Activated CD8-positive, alpha-beta T cell treated with anti-CD3 and anti-CD28 coated beads for 36 hours (primary cell): ENCODE measurements at regions of chr16 and their contacts with region 1.

Region 1: GRCh38 chr16:72832621-72833248 is 215.2 kb downstream of the ZFHX3 start:
- DNase-seq: peak; percentile 77
- ATAC-seq: peak; percentile 88
- H3K4me3 Mint-ChIP-seq: no peak overlapping the region
- H3K27ac Mint-ChIP-seq: no peak overlapping the region
- H3K4me1 Mint-ChIP-seq: peaks cover 4% of the 10 kb centered on the region
- H3K27me3 Mint-ChIP-seq: no peaks in the 10 kb centered on the region
- CTCF ChIP-seq: peak; percentile 95

Region 2: GRCh38 chr16:72362973-72363372 is 469.8 kb before region 1 on chr16:
- CTCF ChIA-PET with region 1: no interaction called
- POLR2A ChIA-PET with region 1: no interaction called
- intact Hi-C with region 1: no loop called
- DNase-seq: no peak
- ATAC-seq: no peak
- H3K4me3 Mint-ChIP-seq: no peak overlapping the region
- H3K27ac Mint-ChIP-seq: no peak overlapping the region
- H3K4me1 Mint-ChIP-seq: no peaks in the 10 kb centered on the region
- H3K27me3 Mint-ChIP-seq: no peaks in the 10 kb centered on the region
- CTCF ChIP-seq: no peak

Region 3: DNA sequence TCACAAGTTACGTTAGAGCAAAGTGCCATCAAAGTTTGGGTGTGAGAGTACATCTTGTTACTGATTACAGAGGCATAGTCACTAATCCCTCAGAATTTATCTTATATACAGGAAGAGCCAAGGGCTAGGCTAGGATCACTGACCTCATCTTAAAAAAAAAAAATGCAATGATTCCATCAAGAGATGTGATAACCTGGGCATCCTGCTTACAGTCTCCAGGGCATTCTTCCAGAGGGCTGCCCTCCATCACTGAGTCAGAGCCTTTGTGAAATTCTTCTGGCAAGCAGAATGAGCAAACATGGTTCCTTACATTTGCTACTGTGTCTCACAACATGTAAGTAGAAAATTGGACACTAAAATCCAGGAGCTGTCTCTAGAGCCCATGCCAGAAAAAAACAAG is 195.4 kb before region 1 on chr16:
- CTCF ChIA-PET with region 1: no interaction called
- POLR2A ChIA-PET with region 1: no interaction called
- intact Hi-C with region 1: no loop called
- DNase-seq: no peak
- ATAC-seq: no peak
- H3K4me3 Mint-ChIP-seq: no peak overlapping the region
- H3K27ac Mint-ChIP-seq: no peak overlapping the region
- H3K4me1 Mint-ChIP-seq: peaks cover 3% of the 10 kb centered on the region
- H3K27me3 Mint-ChIP-seq: no peaks in the 10 kb centered on the region
- CTCF ChIP-seq: no peak

Region 4: DNA sequence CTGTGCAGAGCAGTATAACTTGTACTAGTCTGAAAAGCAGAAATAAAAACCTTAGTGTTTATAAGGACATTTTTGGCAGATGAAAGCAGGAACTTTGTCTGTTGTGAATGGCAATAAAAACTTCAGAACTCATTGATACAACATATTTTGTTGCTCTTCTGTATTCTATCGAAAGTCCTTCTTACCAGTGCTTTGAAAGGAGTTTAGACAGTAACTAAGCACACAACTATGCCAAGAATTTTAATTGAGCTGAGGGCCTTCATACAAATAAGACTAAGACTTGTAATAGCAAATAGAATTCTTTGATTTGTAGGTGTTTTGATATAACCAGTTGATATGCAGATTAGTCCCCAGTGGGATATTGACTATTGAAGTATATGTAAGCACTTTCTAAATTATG is 93.2 kb before region 1 on chr16:
- CTCF ChIA-PET with region 1: no interaction called
- POLR2A ChIA-PET with region 1: no interaction called
- intact Hi-C with region 1: no loop called
- DNase-seq: no peak
- ATAC-seq: no peak
- H3K4me3 Mint-ChIP-seq: no peak overlapping the region
- H3K27ac Mint-ChIP-seq: no peak overlapping the region
- H3K4me1 Mint-ChIP-seq: no peaks in the 10 kb centered on the region
- H3K27me3 Mint-ChIP-seq: peaks cover 1% of the 10 kb centered on the region
- CTCF ChIP-seq: no peak

Region 5: DNA sequence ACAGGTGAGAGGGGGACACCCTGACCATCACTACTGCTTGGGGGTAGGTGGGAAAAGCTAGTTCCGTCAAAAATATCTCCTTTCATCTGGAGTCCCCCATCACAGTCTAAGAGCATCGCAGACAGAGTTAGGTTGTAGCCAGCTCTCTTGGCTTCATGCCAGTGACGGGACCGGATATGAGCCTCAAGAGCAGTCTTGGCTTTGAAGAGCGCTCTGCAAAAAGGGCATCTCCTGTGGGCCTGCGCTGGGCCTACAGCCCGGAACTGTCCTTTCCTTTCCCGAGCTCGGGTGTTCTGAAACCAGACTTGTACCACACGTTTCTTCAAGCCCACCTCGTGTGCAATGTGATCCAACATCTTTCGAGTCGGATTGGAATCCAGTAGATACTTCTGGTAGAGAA is 38.4 kb before region 1 on chr16:
- CTCF ChIA-PET with region 1: interaction called, 11 read pairs
- POLR2A ChIA-PET with region 1: no interaction called
- intact Hi-C with region 1: no loop called
- DNase-seq: no peak
- ATAC-seq: no peak
- H3K4me3 Mint-ChIP-seq: no peak overlapping the region
- H3K27ac Mint-ChIP-seq: no peak overlapping the region
- H3K4me1 Mint-ChIP-seq: no peaks in the 10 kb centered on the region
- H3K27me3 Mint-ChIP-seq: peaks cover 1% of the 10 kb centered on the region
- CTCF ChIP-seq: no peak

Region 6: GRCh38 chr16:72818236-72818845 is 14.4 kb before region 1 on chr16:
- CTCF ChIA-PET with region 1: interaction called, 21 read pairs
- POLR2A ChIA-PET with region 1: no interaction called
- intact Hi-C with region 1: no loop called
- DNase-seq: no peak
- ATAC-seq: no peak
- H3K4me3 Mint-ChIP-seq: no peak overlapping the region
- H3K27ac Mint-ChIP-seq: no peak overlapping the region
- H3K4me1 Mint-ChIP-seq: no peaks in the 10 kb centered on the region
- H3K27me3 Mint-ChIP-seq: peaks cover 6% of the 10 kb centered on the region
- CTCF ChIP-seq: no peak

Region 7: GRCh38 chr16:72856797-72857196 is 24.1 kb after region 1 on chr16:
- CTCF ChIA-PET with region 1: interaction called, 20 read pairs
- POLR2A ChIA-PET with region 1: no interaction called
- intact Hi-C with region 1: no loop called
- DNase-seq: peak; percentile 50
- ATAC-seq: peak; percentile 51
- H3K4me3 Mint-ChIP-seq: no peak overlapping the region
- H3K27ac Mint-ChIP-seq: no peak overlapping the region
- H3K4me1 Mint-ChIP-seq: no peaks in the 10 kb centered on the region
- H3K27me3 Mint-ChIP-seq: peaks cover 2% of the 10 kb centered on the region
- CTCF ChIP-seq: peak; percentile 48

Region 8: DNA sequence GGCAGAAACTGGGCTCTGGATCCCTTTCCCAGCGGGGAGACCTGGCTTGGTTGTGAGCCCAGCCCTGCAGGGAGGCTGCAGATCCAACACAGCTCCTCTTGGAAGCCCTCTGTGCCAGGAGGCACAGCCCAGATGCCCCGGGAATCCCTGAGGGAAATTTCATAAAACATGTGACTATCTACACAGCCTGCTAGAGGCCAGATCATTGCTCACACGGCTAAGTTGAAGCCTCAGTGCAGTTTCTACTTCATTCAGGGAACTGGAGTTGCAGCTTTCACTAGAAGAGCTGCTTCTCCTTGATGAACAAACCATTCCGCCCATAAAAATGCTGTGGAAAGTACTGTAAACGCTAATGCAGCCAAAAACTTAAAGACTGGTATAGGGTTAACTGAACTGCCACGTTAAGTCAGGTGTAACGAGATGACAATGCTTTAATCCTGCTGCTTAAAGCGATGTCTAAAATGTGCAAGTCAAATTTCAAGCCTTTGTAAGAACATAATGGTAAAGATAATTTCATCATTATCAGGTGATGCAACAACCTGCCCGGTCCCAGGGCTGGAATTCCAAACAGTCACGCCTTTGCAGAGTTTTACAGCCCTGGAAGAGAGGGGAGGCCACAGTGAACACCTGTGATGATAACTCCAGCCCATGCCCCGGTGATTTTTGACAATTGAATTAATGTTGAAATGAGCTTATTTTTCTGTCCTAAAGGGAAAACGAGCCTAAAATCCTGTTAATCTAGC is 42.7 kb after region 1 on chr16:
- CTCF ChIA-PET with region 1: no interaction called
- POLR2A ChIA-PET with region 1: no interaction called
- intact Hi-C with region 1: no loop called
- DNase-seq: no peak
- ATAC-seq: no peak
- H3K4me3 Mint-ChIP-seq: no peak overlapping the region
- H3K27ac Mint-ChIP-seq: no peak overlapping the region
- H3K4me1 Mint-ChIP-seq: peaks cover 16% of the 10 kb centered on the region
- H3K27me3 Mint-ChIP-seq: peaks cover 3% of the 10 kb centered on the region
- CTCF ChIP-seq: no peak